Ascending aorta (tissue), 2 donors: ENCODE measurements at regions of chr10 and their contacts with region 1.

Region 1: DNA sequence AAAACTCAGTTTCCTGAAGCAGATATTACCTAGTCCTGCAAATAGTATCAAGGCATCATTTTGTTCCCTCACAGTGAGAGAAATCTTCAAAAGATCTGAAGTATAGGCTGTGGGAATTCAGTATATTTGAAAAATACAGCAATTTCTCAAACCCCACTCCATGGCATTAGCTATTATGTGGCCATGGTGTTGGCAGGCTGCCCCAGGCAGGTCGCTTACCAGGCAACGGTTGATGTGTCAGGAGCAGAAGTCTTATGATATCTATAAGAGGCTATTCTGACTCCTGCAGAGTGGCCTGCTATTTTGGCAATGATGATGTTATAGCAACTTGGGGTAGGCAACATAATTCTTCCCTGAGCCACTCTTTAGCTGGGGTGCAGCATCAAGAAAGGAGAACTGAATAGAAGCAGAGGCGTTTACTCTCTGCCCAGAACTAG is 187.9 kb downstream of the PLXDC2 start:
- DNase-seq: peak; percentile 28 to 74
- H3K4me3 ChIP-seq: peak overlapping the region in 1 of 2 donors; percentile 40
- H3K27ac ChIP-seq: peak overlapping the region; percentile 80 to 83
- H3K4me1 ChIP-seq: peaks cover 24 to 63% of the 10 kb centered on the region in 2 donors
- H3K27me3 ChIP-seq: no peaks in the 10 kb centered on the region
- CTCF ChIP-seq: no peak

Region 2: DNA sequence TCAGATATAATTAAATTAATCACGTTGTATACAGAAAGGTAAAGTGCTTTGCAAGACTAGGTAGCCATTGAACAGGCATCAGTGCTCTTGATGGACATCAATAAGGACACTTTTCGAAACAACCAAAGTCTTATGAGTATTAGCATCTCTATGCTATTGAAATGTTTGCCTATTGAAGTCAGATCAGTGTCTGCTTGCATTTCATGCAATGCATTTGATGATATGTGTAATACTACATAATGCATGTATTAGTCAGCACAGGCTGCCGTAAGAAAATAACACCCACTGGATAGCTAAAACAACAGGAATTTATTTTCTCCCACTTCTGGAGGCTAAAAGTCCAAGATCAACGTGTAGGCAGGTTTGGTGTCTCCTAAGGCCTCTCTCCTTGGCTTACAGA is 397.1 kb before region 1 on chr10:
- intact Hi-C with region 1: no loop called
- DNase-seq: no peak
- H3K4me3 ChIP-seq: no peak overlapping the region
- H3K27ac ChIP-seq: no peak overlapping the region
- H3K4me1 ChIP-seq: no peaks in the 10 kb centered on the region
- H3K27me3 ChIP-seq: no peaks in the 10 kb centered on the region
- CTCF ChIP-seq: no peak

Region 3: GRCh38 chr10:19638182-19638895 is 365.8 kb before region 1 on chr10:
- intact Hi-C with region 1: loop called (anchors 10 kb)
- DNase-seq: peak in 1 of 2 donors; percentile 68
- H3K4me3 ChIP-seq: peak overlapping the region; percentile 47 to 53
- H3K27ac ChIP-seq: peak overlapping the region; percentile 55 to 86
- H3K4me1 ChIP-seq: peaks cover 0 to 17% of the 10 kb centered on the region in 2 donors
- H3K27me3 ChIP-seq: no peaks in the 10 kb centered on the region
- CTCF ChIP-seq: no peak

Region 4: DNA sequence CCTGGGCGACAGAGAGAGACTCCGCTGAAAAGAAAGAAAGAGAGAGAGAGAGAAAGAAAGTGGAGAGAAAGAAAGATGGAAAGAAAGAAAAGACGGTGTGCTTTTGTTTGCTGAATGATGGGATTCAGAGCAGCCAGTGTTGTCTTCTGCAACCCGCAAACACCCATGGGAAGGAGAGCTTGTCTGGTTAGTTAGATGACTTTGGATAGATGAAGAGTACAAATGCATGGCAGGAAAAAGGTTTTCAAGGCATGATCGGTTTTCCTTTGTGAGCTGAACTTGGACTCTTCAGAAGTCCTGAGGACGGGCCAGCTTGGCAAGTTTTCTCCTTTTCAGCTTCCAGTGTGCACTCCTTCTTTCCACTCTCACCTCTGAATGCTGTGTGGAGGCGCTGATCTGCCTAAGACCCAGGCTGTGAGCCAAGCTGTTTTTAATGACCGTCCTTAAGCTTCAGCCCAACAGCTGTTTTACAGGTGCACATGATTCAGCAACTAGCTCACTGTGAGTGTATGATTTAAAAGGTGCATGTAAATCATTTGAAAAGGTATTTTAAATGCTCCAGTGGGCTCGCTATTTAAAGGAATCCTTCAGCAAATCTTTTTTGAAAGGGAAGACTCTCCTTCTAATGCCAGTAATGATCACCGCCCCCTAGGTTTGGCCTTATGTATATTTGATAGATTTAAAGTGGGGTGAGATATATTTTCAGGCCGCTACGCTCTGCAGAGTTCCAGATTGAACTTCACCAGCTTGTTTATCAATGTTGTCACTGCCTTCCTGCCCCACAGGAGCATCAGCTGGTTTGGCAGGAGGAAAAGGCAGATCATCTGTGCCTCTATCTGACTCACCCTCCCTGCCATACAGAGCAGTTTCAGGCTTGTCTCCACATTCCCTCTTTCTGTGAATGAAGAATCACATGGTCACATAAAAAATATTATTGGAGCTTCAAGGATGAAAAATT is 72.9 kb before region 1 on chr10:
- intact Hi-C with region 1: no loop called
- DNase-seq: peak in 1 of 2 donors; percentile 74
- H3K4me3 ChIP-seq: peak overlapping the region in 1 of 2 donors; percentile 30
- H3K27ac ChIP-seq: peak overlapping the region; percentile 72 to 76
- H3K4me1 ChIP-seq: peaks cover 9 to 41% of the 10 kb centered on the region in 2 donors
- H3K27me3 ChIP-seq: no peaks in the 10 kb centered on the region
- CTCF ChIP-seq: no peak

Region 5: GRCh38 chr10:20065814-20066213 is 61.7 kb after region 1 on chr10:
- intact Hi-C with region 1: no loop called
- DNase-seq: no peak
- H3K4me3 ChIP-seq: no peak overlapping the region
- H3K27ac ChIP-seq: no peak overlapping the region
- H3K4me1 ChIP-seq: no peaks in the 10 kb centered on the region
- H3K27me3 ChIP-seq: no peaks in the 10 kb centered on the region
- CTCF ChIP-seq: no peak

Region 6: DNA sequence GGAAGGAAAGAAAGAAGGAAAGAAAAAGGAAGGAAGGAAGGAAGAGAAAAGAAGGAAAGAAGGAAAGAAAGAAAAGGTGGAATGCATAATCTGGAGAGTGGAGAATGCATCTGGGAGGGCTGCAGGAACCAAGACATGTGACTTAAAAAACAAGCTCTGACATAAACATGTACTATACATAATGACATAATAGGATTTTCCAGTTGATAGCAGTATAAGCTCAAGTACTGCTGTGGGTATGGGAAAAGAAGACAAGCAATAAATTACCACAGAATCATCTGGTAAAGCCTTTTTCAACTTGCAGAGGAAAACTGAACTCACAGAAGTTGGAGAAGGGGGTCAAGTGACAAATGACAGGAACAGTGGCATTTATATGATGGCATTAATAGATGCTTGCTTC is 158.0 kb after region 1 on chr10:
- intact Hi-C with region 1: no loop called
- DNase-seq: no peak
- H3K4me3 ChIP-seq: no peak overlapping the region
- H3K27ac ChIP-seq: no peak overlapping the region
- H3K4me1 ChIP-seq: no peaks in the 10 kb centered on the region
- H3K27me3 ChIP-seq: no peaks in the 10 kb centered on the region
- CTCF ChIP-seq: no peak